IMR-90 (cell line): ENCODE measurements at regions of chr19 and their contacts with region 1.

Region 1: DNA sequence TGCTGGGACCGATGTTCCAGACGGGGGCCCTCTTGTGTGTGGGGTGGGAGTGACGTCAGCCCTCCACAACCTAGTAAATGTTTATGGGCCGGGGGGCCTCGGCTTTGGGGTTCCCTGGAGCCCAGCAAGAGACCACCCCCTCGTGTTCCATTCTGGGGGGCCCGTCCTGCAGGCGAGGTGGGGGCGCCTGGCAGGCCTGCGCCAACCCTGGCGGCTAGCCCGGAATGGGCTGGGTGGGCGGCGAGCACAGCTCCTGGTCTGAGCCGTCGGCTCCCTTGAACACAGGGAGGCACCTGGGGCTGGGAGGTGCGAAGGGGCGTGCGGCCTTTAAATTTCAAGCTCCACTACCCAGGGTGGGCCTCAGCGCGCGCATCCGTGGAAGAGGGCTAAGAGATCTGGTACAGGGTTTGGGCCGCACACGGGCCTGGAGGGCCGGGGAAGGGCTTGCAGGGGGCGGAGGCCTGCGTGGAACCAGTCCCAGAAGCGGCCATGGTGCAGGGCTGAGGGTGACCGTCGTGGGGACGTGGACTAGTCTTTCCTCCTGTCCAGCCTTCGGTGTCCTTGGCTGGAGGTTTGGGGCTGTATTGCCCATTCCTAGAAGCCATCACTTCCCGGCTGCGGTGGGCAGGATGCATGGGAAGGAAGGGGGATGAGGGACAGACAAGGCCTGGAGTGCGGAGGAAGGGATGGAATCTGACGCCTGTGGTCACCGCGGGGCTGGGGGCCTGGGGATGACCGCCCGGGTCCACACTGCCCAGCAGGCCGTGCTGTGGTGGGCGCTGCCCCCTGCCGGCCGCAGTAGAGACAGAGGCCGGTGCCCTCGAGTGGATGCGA is 11.4 kb downstream of the NDUFA11 start:
- DNase-seq: peak; percentile 35
- ATAC-seq: peak; percentile 80
- H3K4me3 ChIP-seq: no peak overlapping the region
- H3K27ac ChIP-seq: no peak overlapping the region
- H3K4me1 ChIP-seq: peaks cover 19% of the 10 kb centered on the region
- H3K27me3 ChIP-seq: no peaks in the 10 kb centered on the region
- CTCF ChIP-seq: peak; percentile 87
- POLR2A ChIP-seq: no peak
- RAD21 ChIP-seq: peak; percentile 88

Region 2: DNA sequence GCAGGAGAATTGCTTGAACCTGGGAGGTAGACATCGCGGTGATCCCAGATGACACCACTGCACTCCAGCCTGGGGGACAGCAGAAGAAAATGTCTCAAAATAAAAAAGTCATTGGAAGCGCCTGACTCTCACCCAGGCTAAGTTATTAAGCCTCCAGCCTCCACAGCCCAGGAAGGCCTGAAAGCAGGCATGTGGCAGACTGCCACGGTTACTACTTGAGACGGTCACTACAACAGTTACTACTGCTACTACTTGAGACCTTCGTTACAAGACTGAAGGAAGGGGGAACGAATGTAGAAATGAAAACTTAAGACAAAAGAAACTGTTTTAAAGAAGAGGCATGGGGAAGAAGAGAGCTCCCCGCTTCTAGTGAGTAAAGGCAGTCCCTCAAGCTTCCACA is 117.2 kb before region 1 on chr19:
- CTCF ChIA-PET with region 1: interaction called, 3 read pairs
- POLR2A ChIA-PET with region 1: no interaction called
- dilution Hi-C with region 1: no loop called
- in situ Hi-C with region 1: no loop called
- intact Hi-C with region 1: loop called (anchors 1 kb)
- DNase-seq: peak; percentile 8
- ATAC-seq: no peak
- H3K4me3 ChIP-seq: no peak overlapping the region
- H3K27ac ChIP-seq: no peak overlapping the region
- H3K4me1 ChIP-seq: peaks cover 4% of the 10 kb centered on the region
- H3K27me3 ChIP-seq: no peaks in the 10 kb centered on the region
- CTCF ChIP-seq: no peak
- POLR2A ChIP-seq: no peak
- RAD21 ChIP-seq: no peak

Region 3: DNA sequence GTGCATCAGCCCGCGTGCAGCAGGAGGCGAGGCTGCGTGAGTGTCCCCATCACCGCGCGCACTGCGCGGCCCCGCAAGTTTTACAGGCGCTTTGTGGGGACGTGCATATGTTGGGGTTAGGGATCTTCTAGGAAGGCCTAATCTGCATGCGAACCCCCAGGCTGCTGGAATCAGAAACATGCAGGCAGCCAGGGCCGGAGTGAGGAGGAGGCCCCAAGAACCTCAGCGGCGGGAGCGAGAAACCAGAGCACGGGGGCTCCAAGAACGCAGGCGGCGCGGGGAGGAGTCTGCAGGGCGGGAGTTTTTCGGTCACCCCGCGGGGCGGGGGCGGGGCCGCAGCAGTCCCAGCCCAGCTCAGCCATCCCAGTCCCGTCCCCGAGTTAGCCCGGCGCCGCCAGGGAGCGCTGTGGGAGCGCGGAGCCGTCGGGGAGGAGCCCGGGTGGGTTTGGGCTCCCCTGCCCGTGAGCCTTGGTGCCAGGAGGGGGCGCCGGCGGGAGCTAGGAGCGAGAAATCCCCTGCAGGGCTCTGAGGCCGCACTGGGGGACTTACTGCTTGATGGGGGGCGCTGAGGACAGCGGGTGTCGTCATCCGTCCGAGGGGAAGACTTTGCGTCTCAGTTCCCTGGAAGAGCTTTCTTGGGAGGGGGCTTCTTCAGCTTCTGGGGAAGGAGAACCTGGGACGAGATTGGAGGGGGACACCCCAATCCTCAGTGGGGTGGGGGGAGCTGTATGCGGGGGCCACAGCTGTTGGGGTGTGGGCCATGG is 88.2 kb before region 1 on chr19:
- CTCF ChIA-PET with region 1: interaction called, 37 read pairs
- POLR2A ChIA-PET with region 1: interaction called, 6 read pairs
- dilution Hi-C with region 1: no loop called
- in situ Hi-C with region 1: loop called (anchors 5 kb)
- intact Hi-C with region 1: loop called (anchors 1 kb)
- DNase-seq: peak; percentile 77
- ATAC-seq: peak; percentile 97
- H3K4me3 ChIP-seq: peak overlapping the region; percentile 10
- H3K27ac ChIP-seq: no peak overlapping the region; the same call in 1 of the 2 replicates
- H3K4me1 ChIP-seq: peaks cover 3% of the 10 kb centered on the region; the same call in 1 of the 2 replicates
- H3K27me3 ChIP-seq: peaks cover 30% of the 10 kb centered on the region
- CTCF ChIP-seq: peak; percentile 100
- POLR2A ChIP-seq: peak; percentile 50; the same call in 1 of the 2 replicates
- RAD21 ChIP-seq: peak; percentile 96

Region 4: GRCh38 chr19:5827891-5828660 is 64.1 kb before region 1 on chr19:
- CTCF ChIA-PET with region 1: interaction called, 3 read pairs
- POLR2A ChIA-PET with region 1: no interaction called
- dilution Hi-C with region 1: no loop called
- in situ Hi-C with region 1: no loop called
- intact Hi-C with region 1: loop called (anchors 5 kb)
- DNase-seq: peak; percentile 85
- ATAC-seq: peak; percentile 87
- H3K4me3 ChIP-seq: peak overlapping the region; percentile 59
- H3K27ac ChIP-seq: peak overlapping the region; percentile 58
- H3K4me1 ChIP-seq: peaks cover 9% of the 10 kb centered on the region
- H3K27me3 ChIP-seq: no peaks in the 10 kb centered on the region; the same call in 1 of the 2 replicates
- CTCF ChIP-seq: no peak
- POLR2A ChIP-seq: peak; percentile 90
- RAD21 ChIP-seq: no peak

Region 5: DNA sequence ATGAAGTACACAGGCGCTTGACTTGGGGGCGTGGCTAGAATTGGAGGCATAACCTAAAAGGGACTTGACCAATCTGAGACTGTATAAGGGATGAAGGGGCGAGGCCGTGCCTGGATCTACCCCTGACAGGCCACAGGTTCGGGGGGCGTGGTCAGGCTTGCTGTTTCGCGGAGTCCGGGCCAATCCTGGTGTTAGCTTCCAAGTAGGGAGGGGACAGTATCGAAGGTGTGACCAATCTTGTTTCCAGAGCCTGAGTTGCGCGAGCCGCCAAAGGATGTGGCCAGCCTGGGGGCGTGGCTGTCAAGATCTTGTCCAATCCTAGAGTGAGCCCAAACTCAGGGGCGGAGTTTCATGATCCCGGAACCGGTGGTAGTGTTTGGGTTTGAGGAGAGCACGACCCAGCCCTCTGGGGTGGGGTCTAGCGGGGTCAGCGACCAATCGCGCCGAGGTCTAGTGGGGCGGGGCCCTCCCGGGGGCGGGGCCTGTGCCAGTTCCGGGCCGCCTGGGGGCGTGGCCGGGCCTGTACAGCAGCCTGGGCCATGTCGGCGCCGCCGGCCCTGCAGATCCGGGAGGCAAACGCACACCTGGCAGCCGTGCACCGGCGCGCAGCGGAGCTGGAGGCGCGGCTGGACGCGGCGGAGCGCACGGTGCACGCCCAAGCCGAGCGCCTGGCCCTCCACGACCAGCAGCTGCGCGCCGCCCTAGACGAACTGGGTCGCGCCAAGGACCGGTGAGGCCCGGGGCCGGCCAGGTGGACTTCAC is 12.4 kb after region 1 on chr19 and contains the start of gene VMAC:
- CTCF ChIA-PET with region 1: no interaction called
- POLR2A ChIA-PET with region 1: interaction called, 18 read pairs
- dilution Hi-C with region 1: no loop called
- in situ Hi-C with region 1: no loop called
- intact Hi-C with region 1: no loop called
- DNase-seq: peak; percentile 100
- ATAC-seq: peak; percentile 81
- H3K4me3 ChIP-seq: peak within 1 kb of the TSS; percentile 91
- H3K27ac ChIP-seq: peak within 1 kb of the TSS; percentile 70
- H3K4me1 ChIP-seq: peaks cover 4% of the 10 kb centered on the region
- H3K27me3 ChIP-seq: no peaks in the 10 kb centered on the region
- CTCF ChIP-seq: no peak
- POLR2A ChIP-seq: no peak
- RAD21 ChIP-seq: no peak
- total RNA-seq, gene VMAC: 1.4 and 1.7 TPM in 2 replicates

Region 6: DNA sequence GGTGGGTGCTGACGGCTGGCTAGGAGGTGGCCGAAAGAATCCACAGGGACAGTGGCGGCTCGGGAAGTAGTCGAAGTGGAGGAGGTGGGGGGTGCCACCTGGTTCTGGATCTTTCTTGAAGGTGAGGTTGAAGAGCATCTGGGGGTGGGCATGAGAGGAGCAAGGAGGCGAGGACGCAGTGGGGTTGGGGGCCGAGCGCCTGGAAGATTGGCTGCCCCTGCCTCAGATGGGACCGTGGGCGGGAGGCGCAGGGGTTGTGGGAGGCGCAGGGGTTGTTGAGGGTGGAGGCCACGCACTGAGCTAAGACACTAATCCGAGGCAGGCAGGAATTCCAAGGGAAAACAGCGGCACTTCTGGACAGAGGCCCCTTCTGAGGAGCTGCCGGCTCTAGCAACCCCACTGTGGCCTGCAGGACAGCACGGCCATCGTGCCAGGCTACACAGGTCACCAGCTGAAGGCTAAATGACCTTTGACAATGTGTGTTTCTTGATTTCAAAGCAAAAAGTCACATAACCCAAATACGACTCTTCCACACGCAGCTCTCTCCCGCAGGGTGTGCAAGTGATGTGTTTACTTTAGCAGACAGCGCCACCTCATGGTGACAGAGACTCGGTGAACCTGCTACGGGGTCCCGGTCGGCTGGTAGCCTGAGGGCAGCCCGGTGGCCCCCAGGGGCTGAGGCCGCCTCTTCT is 129.9 kb after region 1 on chr19:
- CTCF ChIA-PET with region 1: no interaction called
- POLR2A ChIA-PET with region 1: no interaction called
- dilution Hi-C with region 1: no loop called
- in situ Hi-C with region 1: no loop called
- intact Hi-C with region 1: loop called (anchors 2 kb)
- DNase-seq: peak; percentile 69
- ATAC-seq: peak; percentile 86
- H3K4me3 ChIP-seq: no peak overlapping the region
- H3K27ac ChIP-seq: no peak overlapping the region
- H3K4me1 ChIP-seq: peaks cover 9% of the 10 kb centered on the region
- H3K27me3 ChIP-seq: no peaks in the 10 kb centered on the region
- CTCF ChIP-seq: peak; percentile 67
- POLR2A ChIP-seq: no peak
- RAD21 ChIP-seq: peak; percentile 69

Region 7: DNA sequence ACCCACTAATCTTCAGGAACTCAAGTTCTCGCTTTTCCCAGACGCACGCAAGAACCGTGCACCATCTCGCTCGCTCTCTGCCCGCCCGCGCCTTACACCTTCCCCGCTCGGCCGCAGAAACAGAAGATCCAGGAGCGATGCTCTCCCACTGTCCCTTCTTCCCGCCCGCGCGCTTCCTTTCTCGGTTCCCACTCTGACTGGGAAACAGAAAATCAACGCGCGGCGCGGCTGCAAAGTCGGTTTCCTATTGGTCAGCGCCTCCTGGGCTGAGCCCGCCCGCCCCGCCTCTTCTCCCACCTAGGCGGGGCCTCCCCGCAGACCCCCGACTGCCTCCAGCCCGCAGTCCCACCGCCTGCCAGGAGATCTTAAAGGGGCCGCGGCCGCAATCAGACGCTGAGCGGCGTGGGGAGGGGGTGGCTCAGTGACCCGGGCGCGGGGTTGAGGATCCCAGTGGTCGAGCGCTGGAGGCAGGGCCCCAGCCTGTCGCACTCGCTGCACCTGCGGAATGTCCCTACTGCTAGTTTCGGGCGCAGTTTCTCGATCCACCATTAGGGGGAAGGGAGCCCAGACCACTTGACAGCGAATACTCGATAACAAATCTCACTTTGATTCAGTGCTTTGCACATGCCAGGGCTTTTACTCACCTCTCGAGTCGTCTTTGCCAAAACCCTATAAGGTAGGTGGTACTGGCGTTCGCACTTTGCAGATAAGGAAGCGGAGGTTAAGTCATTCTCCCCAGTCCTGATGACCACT is 568.1 kb after region 1 on chr19:
- CTCF ChIA-PET with region 1: no interaction called
- POLR2A ChIA-PET with region 1: no interaction called
- dilution Hi-C with region 1: no loop called
- in situ Hi-C with region 1: no loop called
- intact Hi-C with region 1: no loop called
- DNase-seq: peak; percentile 97
- ATAC-seq: peak; percentile 92
- H3K4me3 ChIP-seq: peak overlapping the region; percentile 61
- H3K27ac ChIP-seq: peak overlapping the region; percentile 4; the same call in 1 of the 2 replicates
- H3K4me1 ChIP-seq: peaks cover 3% of the 10 kb centered on the region; the same call in 1 of the 2 replicates
- H3K27me3 ChIP-seq: peaks cover 17% of the 10 kb centered on the region
- CTCF ChIP-seq: peak; percentile 46
- POLR2A ChIP-seq: no peak
- RAD21 ChIP-seq: no peak